Dorsolateral prefrontal cortex (tissue), 120 donors: ENCODE measurements at regions of chr7 and their contacts with region 1.

Region 1: GRCh38 chr7:98617051-98617959 is at the start of gene NPTX2:
- DNase-seq: peak; percentile 27 to 89 (median 78)
- H3K4me3 ChIP-seq: peak within 1 kb of the TSS; percentile 26 to 75 (median 54)
- H3K27ac ChIP-seq: peak within 1 kb of the TSS in 17 of 59 donors; percentile 2 to 73 (median 35)
- H3K27me3 ChIP-seq: peaks cover 0 to 77% (median 21%) of the 10 kb centered on the region in 45 donors
- CTCF ChIP-seq: peak in 23 of 56 donors; percentile 5 to 53 (median 19)
- total RNA-seq, gene NPTX2: 10.7 to 199 (median 28.8) TPM

Region 2: DNA sequence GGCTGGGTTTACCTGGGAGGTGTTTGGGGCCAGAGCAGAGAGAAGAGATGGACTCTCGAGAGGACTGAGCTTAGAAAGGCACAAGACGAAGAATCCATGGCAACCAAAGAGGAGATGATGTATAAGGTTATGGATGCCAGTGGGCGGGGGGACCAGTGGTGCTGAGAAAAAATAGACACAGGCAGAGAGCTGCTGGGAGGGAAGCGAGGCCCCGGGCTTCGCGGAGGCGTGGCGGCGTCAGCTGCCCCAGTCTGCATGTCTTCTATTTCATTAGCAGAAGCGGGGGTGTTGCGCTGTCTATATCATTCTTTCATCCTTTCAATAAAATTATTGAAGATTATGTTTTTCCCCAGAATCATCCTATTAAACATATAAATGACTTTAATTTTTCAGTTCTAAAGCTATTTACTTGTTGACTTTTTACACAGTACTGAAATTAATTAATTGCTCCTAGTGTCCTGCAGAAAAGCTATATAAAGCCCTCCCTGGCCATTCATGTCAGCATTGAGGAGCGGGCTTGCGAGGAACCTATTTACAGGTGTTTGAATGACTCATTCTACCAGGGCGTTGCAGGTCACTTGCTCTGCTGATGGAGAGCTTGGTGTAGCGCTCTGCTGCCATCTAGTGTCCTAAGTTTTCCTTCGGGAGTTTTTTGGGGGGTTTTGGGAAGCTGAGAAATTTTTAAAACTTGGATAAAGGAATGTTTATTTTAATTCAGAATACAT is 449.0 kb before region 1 on chr7:
- intact Hi-C with region 1: no loop called
- DNase-seq: peak in 9 of 10 donors; percentile 49 to 78 (median 65)
- H3K4me3 ChIP-seq: peak overlapping the region in 16 of 59 donors; percentile 3 to 40 (median 12)
- H3K27ac ChIP-seq: peak overlapping the region in 38 of 59 donors; percentile 5 to 79 (median 52)
- H3K27me3 ChIP-seq: no peaks in the 10 kb centered on the region
- CTCF ChIP-seq: peak; percentile 60 to 95 (median 83)

Region 3: GRCh38 chr7:98439484-98439883 is 177.8 kb before region 1 on chr7:
- intact Hi-C with region 1: loop called in 1 of 2 experiments (anchors 5 kb)
- DNase-seq: no peak
- H3K4me3 ChIP-seq: no peak overlapping the region
- H3K27ac ChIP-seq: no peak overlapping the region
- H3K27me3 ChIP-seq: peaks cover 0 to 5% (median 0%) of the 10 kb centered on the region in 45 donors
- CTCF ChIP-seq: no peak

Region 4: DNA sequence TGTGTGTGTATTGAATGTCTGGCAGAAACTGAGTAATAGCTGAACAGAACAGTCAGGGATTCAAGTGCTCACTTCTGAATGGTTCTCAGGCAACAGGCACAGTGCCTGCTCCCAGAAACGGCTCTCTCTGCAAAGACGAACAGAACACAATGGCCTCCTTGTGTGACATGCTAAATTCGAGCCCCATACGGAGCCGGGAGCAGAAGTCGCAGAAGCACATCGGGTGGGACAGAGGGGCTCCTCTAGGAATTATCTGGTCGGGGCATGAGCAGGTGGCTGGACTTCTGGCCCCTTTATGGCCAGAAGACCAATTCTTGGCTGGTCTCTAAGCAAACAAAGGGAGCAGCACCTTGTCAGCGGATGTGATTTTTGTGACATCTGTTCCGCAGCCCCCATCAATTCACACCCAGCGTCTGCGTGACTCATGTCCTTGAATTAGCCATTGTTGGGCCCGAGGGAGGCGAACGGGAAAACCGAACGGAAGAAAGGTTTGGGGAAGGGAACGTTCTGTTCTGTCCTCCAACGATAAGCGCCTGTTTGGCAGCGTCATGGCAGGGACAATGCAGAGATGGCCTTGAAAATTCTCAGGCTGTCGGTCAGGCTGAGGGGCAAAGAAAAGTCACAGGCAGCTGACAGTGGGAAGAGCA is 47.5 kb before region 1 on chr7:
- intact Hi-C with region 1: loop called (anchors 1 kb)
- DNase-seq: peak; percentile 32 to 93 (median 82)
- H3K4me3 ChIP-seq: peak overlapping the region in 35 of 59 donors; percentile 9 to 55 (median 29)
- H3K27ac ChIP-seq: peak overlapping the region in 57 of 59 donors; percentile 26 to 96 (median 85)
- H3K27me3 ChIP-seq: peaks cover 0 to 5% (median 0%) of the 10 kb centered on the region in 45 donors
- CTCF ChIP-seq: no peak

Region 5: DNA sequence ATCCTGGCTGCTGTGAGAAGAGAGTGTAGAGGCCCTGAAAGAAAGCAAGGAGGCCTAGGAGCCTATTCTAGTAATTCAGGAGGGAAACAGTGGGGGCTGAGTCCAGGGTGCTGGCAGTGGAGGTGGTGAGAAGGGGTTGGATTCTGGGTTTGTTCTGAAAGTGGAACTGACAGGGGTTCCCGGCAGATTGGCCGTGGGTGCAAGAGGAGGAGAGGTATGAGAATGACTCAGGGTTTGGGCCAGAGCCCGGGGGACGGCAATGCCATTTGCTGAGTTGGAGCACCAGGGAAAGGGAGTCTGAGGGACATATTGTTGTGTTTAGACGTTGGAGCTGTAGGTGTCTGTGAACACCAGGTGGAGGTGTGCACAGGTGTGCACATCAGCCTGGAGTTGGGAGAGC is 38.3 kb after region 1 on chr7:
- intact Hi-C with region 1: loop called in 1 of 2 experiments (anchors 1 kb)
- DNase-seq: peak; percentile 14 to 89 (median 74)
- H3K4me3 ChIP-seq: no peak overlapping the region
- H3K27ac ChIP-seq: no peak overlapping the region
- H3K27me3 ChIP-seq: no peaks in the 10 kb centered on the region
- CTCF ChIP-seq: no peak

Region 6: DNA sequence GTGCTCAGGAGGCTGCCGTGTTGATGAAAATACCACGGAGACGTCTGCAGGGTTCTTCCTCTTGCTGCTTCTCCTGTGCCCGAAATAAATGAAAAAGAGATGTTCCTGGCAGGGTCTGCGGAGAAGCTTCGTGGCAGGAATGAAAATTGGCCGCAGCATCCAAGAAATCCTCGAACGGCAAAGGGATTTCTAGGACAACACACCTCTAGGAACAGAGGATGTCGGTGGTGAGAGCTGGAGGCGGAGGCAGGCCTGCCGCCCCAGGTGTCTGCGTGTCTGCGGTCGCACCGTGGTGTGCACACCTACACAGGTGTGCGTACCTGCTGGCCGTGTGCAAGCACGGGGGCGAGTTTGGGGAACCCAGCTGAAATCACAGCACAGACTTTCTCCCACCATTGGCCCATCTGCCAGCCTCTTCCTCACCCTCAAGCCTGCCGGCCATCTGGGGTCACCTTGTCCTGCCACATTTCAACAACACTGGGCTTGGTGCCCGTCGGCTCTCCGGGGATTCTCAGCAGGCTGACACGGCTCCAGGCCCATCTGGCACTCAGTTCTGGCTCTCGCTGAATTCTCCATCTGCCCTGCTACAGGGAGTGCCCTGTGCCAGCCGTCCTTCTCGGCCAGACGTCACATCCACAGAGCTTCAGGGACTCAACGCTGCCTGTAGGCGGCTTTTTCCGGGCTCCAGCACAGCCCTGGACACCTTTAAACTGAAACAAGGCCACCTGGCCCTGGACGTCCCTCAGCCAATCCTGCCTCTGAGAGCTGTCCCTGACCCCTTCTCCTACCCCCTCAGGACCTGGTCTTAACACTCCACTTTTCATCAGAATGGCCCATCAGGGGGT is 209.3 kb after region 1 on chr7:
- intact Hi-C with region 1: loop called in 1 of 2 experiments (anchors 10 kb)
- DNase-seq: peak; percentile 49 to 97 (median 78)
- H3K4me3 ChIP-seq: peak overlapping the region in 3 of 59 donors; percentile 9 to 23 (median 12)
- H3K27ac ChIP-seq: peak overlapping the region in 2 of 59 donors; percentile 21 to 46
- H3K27me3 ChIP-seq: no peaks in the 10 kb centered on the region
- CTCF ChIP-seq: peak in 10 of 56 donors; percentile 8 to 21 (median 11)